ENCODE measurements at regions of chr13 and their contacts with region 1.

Region 1: DNA sequence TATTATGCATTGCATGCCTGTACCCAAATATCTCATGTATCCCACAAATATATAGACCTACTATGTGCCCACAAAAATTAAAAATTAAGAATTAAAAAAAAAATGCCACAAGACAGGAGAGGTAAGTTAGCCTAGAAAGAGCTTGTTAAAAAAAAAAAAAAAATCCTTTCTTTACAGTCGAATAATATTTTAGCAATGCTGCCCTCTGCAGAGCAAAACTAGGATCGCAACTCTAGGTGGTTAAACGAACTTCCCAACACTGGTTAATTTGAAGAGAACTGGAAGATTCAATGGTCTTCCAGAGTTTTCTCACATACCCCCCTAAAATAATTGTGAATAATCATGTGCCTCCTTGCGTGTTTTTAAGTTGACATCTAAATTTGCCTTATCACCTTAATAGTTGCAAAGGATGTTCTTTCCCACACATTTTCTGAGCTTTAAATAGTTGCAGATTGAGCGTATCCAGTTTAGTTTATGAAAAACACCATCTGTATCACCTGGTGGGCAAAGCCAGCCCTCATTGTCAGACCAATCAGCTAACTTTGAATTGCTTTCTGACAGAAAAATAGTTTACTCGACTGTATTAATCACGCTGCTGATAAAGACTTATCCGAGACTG is 47.4 kb upstream of the RCBTB2 start:
- DNase-seq: peak; percentile 54 to 87 (median 72)
- ATAC-seq: peak; percentile 73
- H3K4me3 ChIP-seq: no peak overlapping the region
- H3K4me3 Mint-ChIP-seq: no peak overlapping the region
- H3K27ac ChIP-seq: no peak overlapping the region
- H3K27ac Mint-ChIP-seq: no peak overlapping the region
- H3K4me1 ChIP-seq: peaks cover 7% of the 10 kb centered on the region
- H3K4me1 Mint-ChIP-seq: peaks cover 9% of the 10 kb centered on the region
- H3K27me3 ChIP-seq: peaks cover 0 to 8% of the 10 kb centered on the region in 2 experiments
- H3K27me3 Mint-ChIP-seq: peaks cover 6% of the 10 kb centered on the region
- CTCF ChIP-seq: peak; percentile 91

Region 2: GRCh38 chr13:48126944-48127830 is 453.1 kb before region 1 on chr13:
- CTCF ChIA-PET with region 1: no interaction called
- POLR2A ChIA-PET with region 1: no interaction called
- intact Hi-C with region 1: loop called (anchors 1 to 2 kb)
- DNase-seq: peak; percentile 6 to 84 (median 32)
- ATAC-seq: peak; percentile 93
- H3K4me3 ChIP-seq: no peak overlapping the region
- H3K4me3 Mint-ChIP-seq: peak overlapping the region; percentile 23
- H3K27ac ChIP-seq: peak overlapping the region; percentile 61 to 73
- H3K27ac Mint-ChIP-seq: peak overlapping the region; percentile 91
- H3K4me1 ChIP-seq: peaks cover 11% of the 10 kb centered on the region
- H3K4me1 Mint-ChIP-seq: peaks cover 33% of the 10 kb centered on the region
- H3K27me3 ChIP-seq: no peaks in the 10 kb centered on the region
- H3K27me3 Mint-ChIP-seq: no peaks in the 10 kb centered on the region
- CTCF ChIP-seq: peak; percentile 81

Region 3: DNA sequence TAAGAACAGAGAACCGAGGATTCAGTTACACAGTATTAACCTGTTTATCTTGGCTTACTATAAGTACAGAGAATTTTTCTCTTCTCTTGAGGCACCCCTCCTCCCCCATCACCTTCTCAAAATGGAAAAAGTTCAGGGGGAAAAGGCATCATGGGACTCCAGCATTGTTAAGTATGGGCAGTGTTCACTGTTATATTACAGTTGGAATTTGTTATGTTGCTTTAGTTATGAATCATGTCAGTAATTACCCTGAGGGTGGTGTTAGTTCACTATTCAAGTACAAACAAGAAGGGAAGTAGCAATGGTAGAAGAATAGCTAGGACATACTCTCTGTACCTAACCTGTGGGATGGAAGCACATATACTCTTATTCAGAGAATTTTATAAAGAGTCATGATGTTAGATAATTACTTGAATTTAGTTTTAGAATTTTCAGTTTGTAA is 179.4 kb before region 1 on chr13:
- CTCF ChIA-PET with region 1: interaction called, 7 read pairs
- POLR2A ChIA-PET with region 1: interaction called, 20 read pairs
- intact Hi-C with region 1: loop called (anchors 1 to 2 kb)
- DNase-seq: peak in 3 of 14 experiments; percentile 41 to 60 (median 55)
- ATAC-seq: peak; percentile 68
- H3K4me3 ChIP-seq: peak overlapping the region; percentile 16
- H3K4me3 Mint-ChIP-seq: peak overlapping the region; percentile 13
- H3K27ac ChIP-seq: peak overlapping the region in 1 of 2 donors; percentile 26
- H3K27ac Mint-ChIP-seq: peak overlapping the region; percentile 37
- H3K4me1 ChIP-seq: peaks cover 25% of the 10 kb centered on the region
- H3K4me1 Mint-ChIP-seq: peaks cover 60% of the 10 kb centered on the region
- H3K27me3 ChIP-seq: no peaks in the 10 kb centered on the region
- H3K27me3 Mint-ChIP-seq: no peaks in the 10 kb centered on the region
- CTCF ChIP-seq: peak; percentile 48

Region 4: DNA sequence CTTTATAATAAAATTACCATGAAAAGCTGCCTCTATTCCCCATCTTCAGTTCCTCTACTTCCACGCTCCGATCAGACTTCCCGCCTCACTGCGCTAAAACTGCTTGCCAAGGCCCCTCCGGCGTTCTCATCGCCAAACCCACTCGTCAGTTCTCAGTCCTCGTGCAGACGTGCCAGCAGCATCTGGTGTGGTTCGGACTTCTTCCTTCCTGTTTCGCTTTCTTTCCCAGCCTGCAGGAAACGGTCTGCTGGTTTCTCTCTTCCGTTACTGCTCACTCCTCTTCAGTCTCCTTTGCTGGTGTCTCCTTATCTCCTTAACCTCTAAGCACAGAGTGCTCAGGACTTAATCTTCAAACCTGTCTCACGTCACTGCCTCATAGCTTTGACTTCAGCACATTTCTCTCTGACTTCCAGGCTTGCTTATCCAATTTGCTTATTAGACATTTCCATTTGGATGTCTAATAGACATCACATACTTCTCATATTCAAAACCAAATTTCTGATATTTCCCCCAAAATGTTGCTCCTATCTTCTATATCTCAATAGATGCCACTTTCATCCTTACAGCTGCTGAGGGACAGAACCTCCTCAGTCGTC is 87.7 kb before region 1 on chr13:
- CTCF ChIA-PET with region 1: interaction called, 6 read pairs
- POLR2A ChIA-PET with region 1: interaction called, 8 read pairs
- intact Hi-C with region 1: loop called in 1 of 2 experiments (anchors 5 kb)
- DNase-seq: peak; percentile 46 to 92 (median 62)
- ATAC-seq: peak; percentile 83
- H3K4me3 ChIP-seq: peak overlapping the region; percentile 58
- H3K4me3 Mint-ChIP-seq: no peak overlapping the region
- H3K27ac ChIP-seq: peak overlapping the region; percentile 57 to 79
- H3K27ac Mint-ChIP-seq: no peak overlapping the region
- H3K4me1 ChIP-seq: peaks cover 54% of the 10 kb centered on the region
- H3K4me1 Mint-ChIP-seq: peaks cover 25% of the 10 kb centered on the region
- H3K27me3 ChIP-seq: no peaks in the 10 kb centered on the region
- H3K27me3 Mint-ChIP-seq: no peaks in the 10 kb centered on the region
- CTCF ChIP-seq: no peak

Region 5: DNA sequence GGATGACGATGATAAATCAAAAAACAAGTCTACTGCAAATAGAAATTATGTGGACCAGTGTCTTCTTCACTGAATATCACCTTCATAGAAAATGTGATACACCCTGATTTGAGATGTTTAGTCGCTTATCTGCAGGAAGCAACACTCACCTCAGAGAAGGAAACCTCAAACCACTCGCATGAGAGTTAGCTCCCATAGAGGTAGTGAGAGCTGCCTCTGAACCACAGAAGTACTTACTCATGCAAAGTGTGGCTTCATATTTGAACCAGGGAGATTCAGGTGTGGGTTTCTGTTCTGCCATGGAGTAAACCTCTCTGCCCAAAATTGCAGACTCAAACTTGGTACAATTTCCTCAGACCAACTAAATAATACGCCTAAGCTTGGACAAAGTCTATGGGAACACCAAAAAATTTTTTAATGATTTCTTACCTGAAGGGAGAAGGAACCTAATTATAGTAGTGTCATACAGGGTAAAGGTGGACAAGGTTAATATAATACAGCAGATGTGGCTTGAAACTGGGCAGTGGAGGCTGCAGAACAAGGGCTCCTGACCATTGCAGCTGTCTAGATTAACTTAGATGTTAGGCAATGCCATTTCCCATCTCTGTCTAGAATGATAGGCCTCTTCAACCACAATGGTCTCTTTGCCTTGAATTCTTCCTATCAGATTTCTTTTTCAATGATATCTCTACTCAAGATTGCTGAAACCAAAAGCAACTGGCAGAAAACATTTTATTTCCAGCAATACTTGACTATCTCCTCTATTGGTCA is 17.8 kb before region 1 on chr13:
- CTCF ChIA-PET with region 1: interaction called, 12 read pairs
- POLR2A ChIA-PET with region 1: interaction called, 11 read pairs
- intact Hi-C with region 1: no loop called
- DNase-seq: peak; percentile 25 to 93 (median 52)
- ATAC-seq: peak; percentile 98
- H3K4me3 ChIP-seq: peak overlapping the region; percentile 8
- H3K4me3 Mint-ChIP-seq: peak overlapping the region; percentile 11
- H3K27ac ChIP-seq: no peak overlapping the region
- H3K27ac Mint-ChIP-seq: peak overlapping the region; percentile 6
- H3K4me1 ChIP-seq: peaks cover 19% of the 10 kb centered on the region
- H3K4me1 Mint-ChIP-seq: peaks cover 59% of the 10 kb centered on the region
- H3K27me3 ChIP-seq: no peaks in the 10 kb centered on the region
- H3K27me3 Mint-ChIP-seq: peaks cover 29% of the 10 kb centered on the region
- CTCF ChIP-seq: no peak

Measured in CD4-positive, alpha-beta T cell (primary cell).